Activated CD8-positive, alpha-beta T cell treated with anti-CD3 and anti-CD28 coated beads, Interleukin-2, amount 10 ng/mL, durations not matched to agents 7 days and 5 days (primary cell): ENCODE measurements at regions of chr13 and their contacts with region 1.

Region 1: DNA sequence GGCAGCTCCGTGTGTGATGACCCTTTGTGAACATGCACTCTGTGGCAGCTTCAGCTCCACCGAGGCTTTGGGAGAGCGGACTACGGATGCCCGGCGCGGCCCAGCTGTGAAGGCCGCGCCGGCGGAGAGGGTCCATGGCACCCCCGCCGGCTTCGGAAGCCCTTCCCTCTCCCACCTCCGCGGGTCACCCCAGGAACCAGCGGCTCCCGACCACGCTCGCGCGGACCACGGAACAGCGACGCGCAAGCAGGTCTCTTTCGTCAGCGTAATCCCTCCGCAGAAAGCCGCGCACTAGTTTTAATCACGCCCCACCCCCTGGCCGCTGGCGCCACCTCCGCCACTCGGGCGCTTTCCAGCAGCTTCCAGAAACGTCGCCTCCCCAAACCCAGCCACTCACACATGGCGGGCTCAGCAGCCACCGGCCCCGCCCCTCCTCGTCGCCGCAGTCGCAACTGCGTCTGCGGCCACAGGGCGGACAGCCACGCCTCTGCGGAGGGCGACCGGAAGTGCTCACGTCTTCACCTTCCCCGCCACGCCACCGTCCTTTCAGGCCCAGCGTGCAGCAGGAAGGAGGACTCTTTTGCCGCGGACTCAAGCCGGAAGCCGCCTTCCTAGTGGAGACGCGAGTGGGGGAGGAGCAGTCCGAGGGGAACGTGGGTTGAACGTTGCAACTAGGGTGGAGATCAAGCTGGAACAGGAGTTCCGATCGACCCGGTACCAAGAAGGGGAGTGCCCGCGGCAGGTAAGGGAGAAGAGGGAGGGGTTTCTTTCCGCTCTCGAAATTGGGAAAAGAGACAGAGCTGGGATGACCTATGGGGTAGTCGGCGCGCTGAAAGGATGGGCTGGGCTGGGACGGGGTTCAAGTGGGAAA is at the start of gene USPL1:
- DNase-seq: peak; percentile 99
- ATAC-seq: peak; percentile 88
- H3K4me3 Mint-ChIP-seq: no peak within 1 kb of the TSS
- H3K27ac Mint-ChIP-seq: no peak within 1 kb of the TSS
- H3K4me1 Mint-ChIP-seq: peaks cover 33% of the 10 kb centered on the region
- H3K27me3 Mint-ChIP-seq: no peaks in the 10 kb centered on the region
- total RNA-seq, gene USPL1: 14.8 to 16.7 TPM

Region 2: DNA sequence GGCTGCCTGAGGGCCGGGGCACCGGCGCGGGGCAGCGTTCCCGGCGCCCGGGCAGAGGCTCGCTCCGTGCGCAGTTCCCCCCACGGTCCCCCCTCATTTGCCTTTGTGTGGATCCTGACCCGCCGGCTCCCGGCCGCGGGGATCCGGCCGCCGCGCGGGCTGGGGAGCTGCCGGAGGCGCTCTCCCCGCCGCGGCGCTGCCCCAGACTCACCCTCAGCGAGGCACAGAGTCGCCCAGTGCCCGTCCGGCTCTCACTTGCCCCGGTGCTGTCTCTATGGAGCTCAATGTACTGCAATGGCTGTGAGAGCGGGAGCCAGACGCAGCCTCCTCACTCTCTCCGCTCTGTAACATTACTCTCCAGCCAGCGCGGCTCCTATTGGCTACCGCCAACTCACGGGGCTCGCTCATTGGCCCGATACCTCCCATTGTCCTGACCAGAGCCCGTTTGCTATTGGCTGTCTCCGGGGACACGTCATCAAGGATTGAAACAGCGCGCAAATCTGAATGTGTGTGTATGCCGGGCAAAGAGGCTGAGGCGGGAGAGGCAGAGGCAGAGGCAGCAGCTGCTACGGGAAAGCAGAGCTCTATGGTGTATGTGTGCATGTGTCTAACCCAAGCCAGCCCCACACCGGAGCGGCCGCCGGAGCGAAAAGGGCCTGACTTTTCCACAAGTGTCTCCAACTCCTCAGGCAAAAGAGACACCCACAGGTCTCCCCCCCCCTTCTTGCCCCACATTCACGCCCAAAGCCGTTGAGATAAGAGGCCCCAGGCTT is 151.8 kb before region 1 on chr13 and contains the start of gene HMGB1:
- CTCF ChIA-PET with region 1: interaction called, 6 read pairs
- POLR2A ChIA-PET with region 1: interaction called, 57 read pairs
- DNase-seq: peak; percentile 99
- ATAC-seq: peak; percentile 95
- H3K4me3 Mint-ChIP-seq: peak within 1 kb of the TSS; percentile 88
- H3K27ac Mint-ChIP-seq: peak within 1 kb of the TSS; percentile 98
- H3K4me1 Mint-ChIP-seq: peaks cover 28% of the 10 kb centered on the region
- H3K27me3 Mint-ChIP-seq: no peaks in the 10 kb centered on the region
- total RNA-seq, gene HMGB1: 650 to 662 TPM

Region 3: GRCh38 chr13:30486230-30487074 is 131.1 kb before region 1 on chr13:
- CTCF ChIA-PET with region 1: no interaction called
- POLR2A ChIA-PET with region 1: no interaction called
- DNase-seq: no peak
- ATAC-seq: no peak
- H3K4me3 Mint-ChIP-seq: no peak overlapping the region
- H3K27ac Mint-ChIP-seq: no peak overlapping the region
- H3K4me1 Mint-ChIP-seq: no peaks in the 10 kb centered on the region
- H3K27me3 Mint-ChIP-seq: peaks cover 12% of the 10 kb centered on the region

Region 4: DNA sequence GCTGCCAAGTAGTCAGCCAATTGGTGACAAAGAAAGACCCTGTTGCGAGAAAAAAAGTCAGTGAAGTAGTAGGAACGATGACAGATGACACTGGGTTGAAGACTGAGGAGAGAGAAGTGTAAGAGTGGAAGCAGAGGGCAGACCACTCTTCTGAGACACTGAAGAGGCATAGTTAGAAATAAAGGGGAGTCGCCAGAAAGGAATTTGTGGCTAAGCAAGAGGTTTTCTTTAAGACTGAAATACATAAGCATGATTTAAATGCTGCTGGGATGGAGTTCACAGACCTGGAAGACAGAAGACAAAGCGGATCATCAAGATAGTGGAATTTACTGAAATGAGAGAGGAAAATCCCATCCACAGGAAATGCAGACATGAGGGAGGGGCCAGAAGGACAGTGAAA is 56.0 kb before region 1 on chr13:
- CTCF ChIA-PET with region 1: no interaction called
- POLR2A ChIA-PET with region 1: no interaction called
- DNase-seq: no peak
- ATAC-seq: no peak
- H3K4me3 Mint-ChIP-seq: no peak overlapping the region
- H3K27ac Mint-ChIP-seq: no peak overlapping the region
- H3K4me1 Mint-ChIP-seq: peaks cover 12% of the 10 kb centered on the region
- H3K27me3 Mint-ChIP-seq: peaks cover 34% of the 10 kb centered on the region

Region 5: GRCh38 chr13:30577401-30577852 is 40.1 kb before region 1 on chr13:
- CTCF ChIA-PET with region 1: interaction called, 4 read pairs
- POLR2A ChIA-PET with region 1: interaction called, 13 read pairs
- DNase-seq: peak; percentile 55
- ATAC-seq: peak; percentile 59
- H3K4me3 Mint-ChIP-seq: no peak overlapping the region
- H3K27ac Mint-ChIP-seq: no peak overlapping the region
- H3K4me1 Mint-ChIP-seq: peaks cover 28% of the 10 kb centered on the region
- H3K27me3 Mint-ChIP-seq: peaks cover 25% of the 10 kb centered on the region

Region 6: GRCh38 chr13:30629527-30629926 is 12.0 kb after region 1 on chr13:
- CTCF ChIA-PET with region 1: interaction called, 4 read pairs
- POLR2A ChIA-PET with region 1: interaction called, 13 read pairs
- DNase-seq: no peak
- ATAC-seq: no peak
- H3K4me3 Mint-ChIP-seq: no peak overlapping the region
- H3K27ac Mint-ChIP-seq: no peak overlapping the region
- H3K4me1 Mint-ChIP-seq: peaks cover 35% of the 10 kb centered on the region
- H3K27me3 Mint-ChIP-seq: no peaks in the 10 kb centered on the region

Region 7: GRCh38 chr13:30739761-30740642 is 122.5 kb after region 1 on chr13:
- CTCF ChIA-PET with region 1: interaction called, 7 read pairs
- POLR2A ChIA-PET with region 1: interaction called, 12 read pairs
- DNase-seq: peak; percentile 78
- ATAC-seq: peak; percentile 62
- H3K4me3 Mint-ChIP-seq: peak overlapping the region; percentile 66
- H3K27ac Mint-ChIP-seq: peak overlapping the region; percentile 89
- H3K4me1 Mint-ChIP-seq: peaks cover 89% of the 10 kb centered on the region
- H3K27me3 Mint-ChIP-seq: peaks cover 4% of the 10 kb centered on the region

Region 8: GRCh38 chr13:30752201-30752797 is 134.7 kb after region 1 on chr13:
- CTCF ChIA-PET with region 1: no interaction called
- POLR2A ChIA-PET with region 1: no interaction called
- DNase-seq: no peak
- ATAC-seq: no peak
- H3K4me3 Mint-ChIP-seq: no peak overlapping the region
- H3K27ac Mint-ChIP-seq: no peak overlapping the region
- H3K4me1 Mint-ChIP-seq: peaks cover 38% of the 10 kb centered on the region
- H3K27me3 Mint-ChIP-seq: no peaks in the 10 kb centered on the region

Region 9: DNA sequence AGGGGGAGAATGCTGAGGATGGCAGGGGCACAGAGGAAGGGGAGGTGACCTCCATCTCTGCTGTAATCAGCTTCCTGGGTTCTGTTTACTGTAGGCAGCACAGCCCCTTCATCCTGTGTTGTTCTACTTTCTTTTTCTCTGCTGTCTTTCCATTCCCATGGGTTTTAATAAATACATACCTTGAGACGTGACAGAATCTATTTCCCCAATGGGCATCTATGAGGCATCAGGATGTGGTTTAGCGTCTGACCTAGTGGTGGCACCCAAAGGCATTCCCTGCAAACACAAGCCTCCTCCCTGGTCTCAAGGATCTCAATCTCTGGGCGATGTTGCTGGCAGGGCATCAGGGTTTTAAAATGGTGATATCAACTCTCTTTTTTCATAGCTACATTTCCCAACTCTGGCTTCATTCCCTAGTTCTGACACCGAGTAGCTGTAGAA is 178.6 kb after region 1 on chr13:
- CTCF ChIA-PET with region 1: no interaction called
- POLR2A ChIA-PET with region 1: interaction called, 11 read pairs
- DNase-seq: peak; percentile 34
- ATAC-seq: peak; percentile 78
- H3K4me3 Mint-ChIP-seq: peak overlapping the region; percentile 2
- H3K27ac Mint-ChIP-seq: peak overlapping the region; percentile 74
- H3K4me1 Mint-ChIP-seq: peaks cover 34% of the 10 kb centered on the region
- H3K27me3 Mint-ChIP-seq: no peaks in the 10 kb centered on the region